BJ (cell line): ENCODE measurements at regions of chr6 and their contacts with region 1.

Region 1: DNA sequence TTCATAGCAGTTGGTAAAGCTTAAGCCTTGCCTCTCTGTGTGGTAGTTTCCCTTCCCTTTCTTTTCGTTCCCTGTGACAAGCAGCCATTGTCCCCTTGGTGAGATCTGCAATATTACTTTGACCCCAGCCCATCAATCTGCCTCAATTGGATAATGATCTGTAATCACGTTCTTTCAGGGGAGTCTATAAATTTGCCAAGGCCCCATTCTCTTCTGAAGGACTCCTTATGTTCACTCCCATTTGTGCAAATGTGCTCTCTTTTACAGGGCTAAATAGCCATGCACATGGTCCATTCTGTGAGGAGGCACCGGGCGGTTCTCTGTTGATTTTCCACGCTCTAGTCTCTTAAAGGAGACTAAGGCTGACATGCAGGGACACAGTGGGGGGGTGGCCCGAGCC is 660.4 kb upstream of the SLC35B3 start:
- DNase-seq: no peak
- H3K4me3 ChIP-seq: no peak overlapping the region
- H3K27me3 ChIP-seq: no peaks in the 10 kb centered on the region
- CTCF ChIP-seq: no peak

Region 2: DNA sequence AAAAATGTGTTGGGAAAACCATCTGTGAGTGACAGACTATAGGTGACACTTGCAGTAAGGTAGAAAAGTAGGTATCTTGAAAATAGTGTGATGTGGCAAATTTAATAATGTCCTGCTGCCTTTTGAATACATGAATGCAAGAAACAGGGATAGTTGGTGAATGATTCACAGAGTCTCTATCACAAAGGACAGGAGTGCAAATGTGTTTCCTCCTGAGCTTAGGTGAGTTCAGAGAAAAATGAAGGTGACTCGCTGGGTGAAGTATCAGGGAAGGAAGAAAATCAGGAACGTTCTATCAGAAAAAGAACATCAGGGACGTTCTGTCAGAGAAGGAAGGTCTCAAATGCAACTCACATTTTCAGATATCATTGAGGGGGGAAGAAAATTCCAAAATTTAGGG is 102.6 kb before region 1 on chr6:
- CTCF ChIA-PET with region 1: no interaction called
- POLR2A ChIA-PET with region 1: no interaction called
- DNase-seq: no peak
- H3K4me3 ChIP-seq: no peak overlapping the region
- H3K27me3 ChIP-seq: no peaks in the 10 kb centered on the region
- CTCF ChIP-seq: no peak

Region 3: GRCh38 chr6:9233686-9234085 is 138.0 kb after region 1 on chr6:
- CTCF ChIA-PET with region 1: no interaction called
- POLR2A ChIA-PET with region 1: no interaction called
- DNase-seq: no peak
- H3K4me3 ChIP-seq: no peak overlapping the region
- H3K27me3 ChIP-seq: no peaks in the 10 kb centered on the region
- CTCF ChIP-seq: no peak

Region 4: DNA sequence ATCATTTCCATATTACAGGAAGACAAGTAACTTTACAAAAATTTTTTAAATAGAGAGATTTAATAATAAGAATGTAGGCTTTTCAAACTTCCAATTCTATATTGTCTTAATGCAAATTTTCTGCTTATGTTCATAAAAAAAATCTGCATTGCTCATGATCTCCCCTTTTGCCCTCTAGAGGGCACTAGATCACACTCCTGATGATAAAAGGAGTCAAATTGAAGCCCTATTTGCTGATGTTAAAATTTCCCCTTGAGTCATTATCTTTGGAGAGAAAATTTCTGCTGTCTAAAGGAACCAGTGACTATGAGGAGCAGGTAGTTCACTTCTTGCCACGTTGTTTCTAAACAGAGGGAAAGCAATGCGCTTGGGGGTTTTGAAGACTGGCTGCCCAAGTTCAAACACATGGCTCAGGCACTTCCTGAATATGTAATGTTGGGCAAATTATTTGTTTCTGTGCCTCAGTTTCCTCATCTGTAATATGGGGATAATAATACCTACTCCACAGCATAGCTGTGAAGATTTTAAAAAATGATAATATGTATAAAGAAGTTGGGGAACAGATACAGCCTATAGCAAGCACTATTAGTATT is 444.9 kb after region 1 on chr6:
- CTCF ChIA-PET with region 1: no interaction called
- POLR2A ChIA-PET with region 1: no interaction called
- DNase-seq: no peak
- H3K4me3 ChIP-seq: no peak overlapping the region
- H3K27me3 ChIP-seq: no peaks in the 10 kb centered on the region
- CTCF ChIP-seq: peak; percentile 76

Region 5: DNA sequence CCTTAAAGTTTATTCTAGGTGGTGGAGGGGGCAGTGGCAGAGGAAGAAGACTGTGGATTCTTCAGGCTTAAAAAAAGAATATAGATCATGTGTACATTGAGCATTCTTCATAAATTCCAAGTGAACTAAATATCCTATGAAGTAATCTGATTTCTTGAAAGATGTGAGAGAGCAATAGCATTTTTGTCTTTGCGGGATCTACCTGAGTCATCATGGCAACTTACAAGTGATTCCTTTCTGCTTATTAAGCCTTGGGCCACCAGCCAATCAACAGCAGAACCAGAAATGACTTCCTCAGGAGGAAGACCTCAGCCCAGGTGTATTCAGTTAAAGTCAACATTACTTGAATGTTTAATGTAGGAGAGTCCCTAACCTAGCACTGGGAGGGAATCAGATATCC is 562.3 kb after region 1 on chr6:
- CTCF ChIA-PET with region 1: no interaction called
- POLR2A ChIA-PET with region 1: interaction called, 10 read pairs
- DNase-seq: no peak
- H3K4me3 ChIP-seq: no peak overlapping the region
- H3K27me3 ChIP-seq: no peaks in the 10 kb centered on the region
- CTCF ChIP-seq: no peak